ENCODE measurements at regions of chr13 and their contacts with region 1.

Region 1: DNA sequence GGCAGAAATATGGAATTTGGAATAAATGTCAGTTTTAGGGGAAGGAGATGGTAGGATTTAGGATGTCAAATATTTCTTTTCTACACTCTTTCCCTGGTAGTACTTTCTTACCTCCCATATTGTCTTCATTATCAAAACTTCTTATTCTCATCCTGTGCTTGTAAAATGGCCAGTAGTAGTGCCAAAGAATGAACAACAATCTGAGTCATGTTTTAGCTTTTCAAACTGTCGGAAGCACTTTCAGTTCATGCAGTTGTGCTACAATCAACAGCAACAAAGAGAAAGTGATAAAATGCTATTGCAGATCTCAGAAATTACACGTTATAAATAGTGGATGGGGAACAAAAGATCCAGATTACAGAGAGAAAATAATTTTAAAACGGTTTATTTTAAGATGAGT is 193.7 kb upstream of the RXFP2 start:
- DNase-seq: no peak
- H3K4me3 ChIP-seq: no peak overlapping the region
- H3K27ac ChIP-seq: no peak overlapping the region
- H3K4me1 ChIP-seq: peaks cover 7% of the 10 kb centered on the region
- H3K27me3 ChIP-seq: no peaks in the 10 kb centered on the region
- CTCF ChIP-seq: no peak

Region 2: DNA sequence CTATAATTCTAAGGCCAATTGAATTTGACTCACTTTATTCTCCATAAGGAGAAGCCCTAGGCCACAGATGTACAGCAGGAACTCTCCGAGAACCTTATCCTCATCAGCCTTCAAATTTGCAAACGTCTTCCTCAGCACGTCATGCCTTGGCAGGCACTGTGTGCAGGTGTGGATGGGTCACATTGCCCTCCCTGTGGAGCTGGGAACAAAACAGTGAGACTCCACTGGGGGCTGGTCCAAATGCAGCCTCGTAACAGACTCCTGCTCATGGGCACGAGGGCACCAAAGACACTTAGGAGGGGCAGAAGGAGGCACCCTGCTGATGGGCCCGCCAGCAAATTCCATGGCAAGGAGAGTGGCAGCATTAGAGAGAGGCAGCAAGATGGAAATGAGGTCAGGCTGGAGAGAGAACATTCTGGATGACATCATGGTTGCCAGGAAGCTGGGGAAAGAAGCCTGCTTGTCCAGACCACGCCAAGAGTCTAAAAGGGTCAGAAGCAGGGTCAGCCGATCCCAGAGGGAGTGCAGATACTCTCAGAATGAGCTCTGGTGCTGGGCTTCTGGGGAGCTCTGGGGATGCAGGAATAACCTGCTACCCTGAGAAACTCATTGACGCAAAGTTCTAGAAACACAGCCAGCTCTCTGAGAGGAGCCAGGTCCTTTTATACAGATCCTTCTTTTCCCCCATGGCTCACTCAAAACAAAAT is 103.7 kb before region 1 on chr13:
- intact Hi-C with region 1: no loop called
- DNase-seq: peak; percentile 81
- H3K4me3 ChIP-seq: no peak overlapping the region
- H3K27ac ChIP-seq: peak overlapping the region; percentile 65
- H3K4me1 ChIP-seq: peaks cover 12% of the 10 kb centered on the region
- H3K27me3 ChIP-seq: peaks cover 25% of the 10 kb centered on the region
- CTCF ChIP-seq: no peak

Region 3: GRCh38 chr13:31733066-31733465 is 187.4 kb after region 1 on chr13:
- intact Hi-C with region 1: loop called (anchors 10 kb)
- DNase-seq: no peak
- H3K4me3 ChIP-seq: peak overlapping the region; percentile 21
- H3K27ac ChIP-seq: no peak overlapping the region
- H3K4me1 ChIP-seq: no peaks in the 10 kb centered on the region
- H3K27me3 ChIP-seq: peaks cover 18% of the 10 kb centered on the region
- CTCF ChIP-seq: no peak

Region 4: GRCh38 chr13:31896427-31896826 is 350.8 kb after region 1 on chr13:
- intact Hi-C with region 1: no loop called
- DNase-seq: peak; percentile 42
- H3K4me3 ChIP-seq: peak overlapping the region; percentile 22
- H3K27ac ChIP-seq: peak overlapping the region; percentile 87
- H3K4me1 ChIP-seq: peaks cover 84% of the 10 kb centered on the region
- H3K27me3 ChIP-seq: no peaks in the 10 kb centered on the region
- CTCF ChIP-seq: no peak